Natural killer cell (primary cell): ENCODE measurements at regions of chr4 and their contacts with region 1.

Region 1: DNA sequence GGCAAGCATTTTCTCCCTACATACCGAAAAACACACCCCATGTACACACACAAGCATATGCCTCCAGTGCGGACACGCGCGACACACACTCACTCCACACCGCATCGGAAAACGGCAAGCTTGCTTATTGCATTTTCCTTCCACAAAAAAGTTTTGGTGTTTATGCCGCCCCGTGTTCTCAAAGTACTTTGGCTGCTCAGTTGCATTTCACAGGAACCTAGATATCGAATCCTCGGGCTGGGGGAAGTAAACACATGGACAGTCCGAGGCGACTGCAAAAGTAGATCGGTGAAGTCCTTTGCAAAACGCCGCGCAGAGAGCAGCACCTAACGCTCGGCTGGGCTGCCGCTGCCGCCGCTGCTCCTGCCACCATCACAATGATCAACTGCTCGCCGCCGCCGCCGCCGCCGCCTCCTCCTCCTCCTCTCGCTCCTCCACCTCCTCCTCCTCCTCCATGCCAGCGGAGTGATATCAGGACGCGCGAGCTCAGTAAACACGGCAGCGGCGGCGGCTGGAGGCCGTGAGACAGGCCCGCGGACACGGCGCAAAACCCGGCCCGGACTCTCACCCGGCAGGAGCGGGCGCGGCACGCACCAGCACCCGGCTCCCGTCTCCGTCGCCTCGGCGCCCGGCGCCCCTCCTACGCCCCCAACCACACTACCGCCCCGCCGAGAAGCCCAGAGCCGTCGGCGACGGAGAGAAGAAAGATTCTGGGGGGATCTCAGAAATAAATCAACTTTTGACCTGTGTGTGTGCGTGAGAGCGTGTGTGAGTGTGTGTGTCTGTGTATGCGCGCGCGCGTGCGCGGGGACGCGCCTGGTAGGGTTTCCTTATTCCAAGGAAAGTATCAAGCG is at the start of gene MAML3:
- DNase-seq: peak; percentile 79 to 86
- ATAC-seq: peak; percentile 64 to 70 (median 64)
- H3K4me3 ChIP-seq: peak within 1 kb of the TSS; percentile 79
- H3K4me3 Mint-ChIP-seq: peak within 1 kb of the TSS; percentile 93
- H3K27ac ChIP-seq: peak within 1 kb of the TSS; percentile 59
- H3K27ac Mint-ChIP-seq: peak within 1 kb of the TSS; percentile 26 to 85
- H3K4me1 ChIP-seq: peaks cover 37% of the 10 kb centered on the region
- H3K4me1 Mint-ChIP-seq: peaks cover 17 to 40% of the 10 kb centered on the region in 2 donors
- H3K27me3 ChIP-seq: no peaks in the 10 kb centered on the region
- H3K27me3 Mint-ChIP-seq: peaks cover 7 to 15% of the 10 kb centered on the region in 2 donors
- CTCF ChIP-seq: no peak
- total RNA-seq, gene MAML3: 1.7 to 5.6 (median 2.8) TPM

Region 2: GRCh38 chr4:140012688-140013486 is 141.1 kb before region 1 on chr4:
- intact Hi-C with region 1: loop called (anchors 5 kb)
- DNase-seq: peak in 1 of 2 donors; percentile 81
- ATAC-seq: peak; percentile 79 to 91 (median 81)
- H3K4me3 ChIP-seq: no peak overlapping the region
- H3K4me3 Mint-ChIP-seq: no peak overlapping the region
- H3K27ac ChIP-seq: no peak overlapping the region
- H3K27ac Mint-ChIP-seq: no peak overlapping the region
- H3K4me1 ChIP-seq: no peaks in the 10 kb centered on the region
- H3K4me1 Mint-ChIP-seq: peaks cover 6 to 9% of the 10 kb centered on the region in 2 donors
- H3K27me3 ChIP-seq: no peaks in the 10 kb centered on the region
- H3K27me3 Mint-ChIP-seq: peaks cover 21 to 36% of the 10 kb centered on the region in 2 donors
- CTCF ChIP-seq: peak; percentile 66

Region 3: DNA sequence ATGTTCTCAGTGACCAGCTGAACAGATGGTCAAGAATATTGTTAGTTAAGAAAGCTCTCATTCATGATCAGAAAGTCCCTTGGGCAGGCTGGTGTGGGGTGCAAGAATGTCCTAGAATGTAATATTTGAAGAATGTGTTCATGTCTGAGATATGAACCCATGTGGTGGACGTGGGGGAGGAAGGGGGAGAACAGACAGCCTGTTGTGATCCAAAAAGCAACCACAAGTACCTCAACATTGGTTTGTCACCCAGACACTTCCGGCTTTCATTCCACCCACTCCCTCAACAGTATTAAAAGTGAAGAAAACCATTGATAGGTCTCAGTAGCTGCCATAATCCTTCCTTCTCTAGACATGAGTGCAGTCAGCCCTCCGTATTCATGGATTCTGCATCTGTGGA is 82.1 kb before region 1 on chr4:
- intact Hi-C with region 1: loop called (anchors 2 kb)
- DNase-seq: peak; percentile 48 to 85
- ATAC-seq: peak; percentile 82 to 97 (median 87)
- H3K4me3 ChIP-seq: no peak overlapping the region
- H3K4me3 Mint-ChIP-seq: peak overlapping the region; percentile 83
- H3K27ac ChIP-seq: peak overlapping the region; percentile 31
- H3K27ac Mint-ChIP-seq: peak overlapping the region; percentile 67 to 73
- H3K4me1 ChIP-seq: peaks cover 27% of the 10 kb centered on the region
- H3K4me1 Mint-ChIP-seq: peaks cover 22 to 26% of the 10 kb centered on the region in 2 donors
- H3K27me3 ChIP-seq: peaks cover 3% of the 10 kb centered on the region
- H3K27me3 Mint-ChIP-seq: peaks cover 58 to 76% of the 10 kb centered on the region in 2 donors
- CTCF ChIP-seq: no peak

Region 4: GRCh38 chr4:140252742-140253555 is 99.0 kb after region 1 on chr4:
- intact Hi-C with region 1: loop called (anchors 5 kb)
- DNase-seq: peak; percentile 53 to 79
- ATAC-seq: peak; percentile 79 to 89 (median 80)
- H3K4me3 ChIP-seq: peak overlapping the region; percentile 44
- H3K4me3 Mint-ChIP-seq: peak overlapping the region; percentile 70
- H3K27ac ChIP-seq: no peak overlapping the region
- H3K27ac Mint-ChIP-seq: no peak overlapping the region
- H3K4me1 ChIP-seq: no peaks in the 10 kb centered on the region
- H3K4me1 Mint-ChIP-seq: peaks cover 0 to 5% of the 10 kb centered on the region in 2 donors
- H3K27me3 ChIP-seq: peaks cover 7% of the 10 kb centered on the region
- H3K27me3 Mint-ChIP-seq: peaks cover 27 to 41% of the 10 kb centered on the region in 2 donors
- CTCF ChIP-seq: peak; percentile 98